Ovary (tissue), 10 donors: ENCODE measurements at regions of chr1 and their contacts with region 1.

Region 1: GRCh38 chr1:27321813-27322577 is at the start of gene TMEM222:
- DNase-seq: peak; percentile 94 to 97 (median 96)
- H3K4me3 ChIP-seq: peak within 1 kb of the TSS; percentile 92
- H3K27ac ChIP-seq: peak within 1 kb of the TSS in 1 of 2 donors; percentile 56
- H3K4me1 ChIP-seq: peaks cover 9% of the 10 kb centered on the region
- H3K27me3 ChIP-seq: no peaks in the 10 kb centered on the region
- CTCF ChIP-seq: peak in 2 of 3 donors; percentile 56 to 66
- EP300 ChIP-seq: peak; percentile 35
- POLR2A ChIP-seq: no peak
- total RNA-seq, gene TMEM222: 12.9 to 52.5 (median 36.5) TPM

Region 2: DNA sequence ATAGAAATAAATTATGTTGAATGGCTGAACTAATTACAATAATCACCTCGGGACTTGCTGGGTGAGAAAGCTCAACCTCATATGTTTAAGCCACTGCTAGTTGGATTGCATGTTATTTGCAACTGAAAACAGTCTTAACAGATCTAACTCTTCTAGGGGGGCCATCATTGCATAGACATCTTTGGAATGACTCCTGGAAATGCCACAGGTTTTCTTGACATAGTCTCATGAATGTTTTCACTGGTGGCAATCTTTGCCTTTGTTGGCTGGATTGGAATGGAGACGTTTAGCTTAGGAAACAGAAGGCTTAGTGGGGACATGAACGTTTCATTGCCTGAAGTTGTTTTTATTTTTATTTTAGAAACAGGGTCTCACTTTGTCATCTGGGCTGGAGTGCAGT is 96.4 kb before region 1 on chr1:
- intact Hi-C with region 1: no loop called
- DNase-seq: no peak
- H3K4me3 ChIP-seq: no peak overlapping the region
- H3K27ac ChIP-seq: no peak overlapping the region
- H3K4me1 ChIP-seq: no peaks in the 10 kb centered on the region
- H3K27me3 ChIP-seq: no peaks in the 10 kb centered on the region
- CTCF ChIP-seq: no peak
- EP300 ChIP-seq: no peak
- POLR2A ChIP-seq: no peak

Region 3: DNA sequence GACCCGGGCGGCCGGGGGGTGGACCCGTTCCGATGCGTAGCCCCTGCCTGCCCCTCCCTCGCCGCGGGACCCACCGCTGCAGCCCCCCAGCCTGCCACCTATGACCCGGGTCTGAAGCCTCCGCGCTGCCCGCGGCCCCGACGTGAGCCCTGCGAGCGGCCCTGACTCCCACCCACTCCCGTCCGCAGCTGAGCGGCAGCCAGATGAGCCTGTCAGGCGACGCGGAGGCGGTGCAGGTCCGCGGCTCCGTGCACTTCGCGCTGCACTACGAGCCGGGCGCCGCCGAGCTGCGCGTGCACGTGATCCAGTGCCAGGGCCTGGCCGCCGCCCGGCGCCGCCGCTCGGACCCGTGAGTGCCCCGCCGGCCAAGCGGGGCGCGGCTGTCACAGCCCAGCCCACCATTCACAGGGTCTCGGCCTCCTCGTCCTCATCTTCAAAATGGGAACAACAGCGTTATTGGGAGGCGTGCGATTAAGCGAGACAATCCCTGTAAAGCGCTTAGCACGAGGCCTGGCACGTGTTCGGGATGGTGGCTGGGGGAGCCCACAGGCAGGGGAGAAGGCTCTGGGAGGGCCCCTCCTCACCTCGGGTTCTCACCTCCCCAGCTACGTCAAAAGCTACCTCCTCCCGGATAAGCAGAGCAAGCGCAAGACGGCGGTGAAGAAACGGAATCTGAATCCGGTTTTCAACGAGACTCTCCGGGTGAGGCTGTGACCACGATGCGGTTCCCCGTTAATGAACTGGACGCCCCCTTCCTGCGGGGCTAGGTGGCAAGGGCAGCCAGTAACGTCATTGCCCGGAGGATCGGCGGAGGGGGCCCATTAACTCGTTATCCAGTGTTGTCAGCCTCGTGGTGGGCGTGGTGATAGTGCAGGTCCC is 28.0 kb after region 1 on chr1:
- intact Hi-C with region 1: loop called in 2 of 4 experiments (anchors 2 to 5 kb)
- DNase-seq: peak; percentile 63 to 79 (median 66)
- H3K4me3 ChIP-seq: peak overlapping the region; percentile 45
- H3K27ac ChIP-seq: no peak overlapping the region
- H3K4me1 ChIP-seq: peaks cover 8% of the 10 kb centered on the region
- H3K27me3 ChIP-seq: no peaks in the 10 kb centered on the region
- CTCF ChIP-seq: peak in 1 of 3 donors; percentile 6
- EP300 ChIP-seq: no peak
- POLR2A ChIP-seq: no peak

Region 4: DNA sequence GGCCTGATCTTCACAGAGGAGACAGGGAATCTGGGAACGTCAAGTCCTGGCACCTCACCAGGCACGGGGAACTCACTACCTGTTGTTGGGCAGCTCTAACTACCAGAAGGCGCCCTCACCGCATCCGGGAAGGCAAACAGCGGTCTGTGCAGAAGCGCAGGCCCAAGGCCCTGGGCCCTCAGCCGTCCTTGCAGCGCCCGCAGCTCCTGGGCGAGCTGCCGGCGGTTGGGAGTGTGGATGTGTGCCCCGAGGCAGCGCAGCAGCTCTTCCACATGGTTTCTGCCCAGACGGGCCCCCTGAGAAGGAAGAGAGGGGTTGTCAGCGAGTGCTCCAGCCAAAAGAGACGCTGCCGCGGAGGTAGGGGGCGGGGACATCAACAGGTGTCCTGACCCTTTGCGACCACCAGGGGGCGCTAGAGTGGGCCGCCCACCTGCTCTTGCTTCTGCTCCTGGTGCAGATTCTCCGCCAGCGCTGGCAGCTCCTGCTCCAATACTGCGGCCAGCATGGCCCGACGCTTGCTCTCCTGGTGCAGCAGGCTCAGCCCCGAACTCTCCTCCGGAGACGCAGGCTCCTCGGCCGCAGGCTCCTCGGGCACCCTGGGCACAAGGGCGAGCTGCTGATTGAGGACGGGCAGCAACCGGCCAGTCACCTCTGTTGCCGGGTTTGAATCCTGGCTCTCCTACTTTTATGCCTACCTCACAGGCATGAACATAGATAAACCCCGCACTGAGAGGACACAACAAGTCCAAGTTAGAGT is 35.5 kb after region 1 on chr1:
- intact Hi-C with region 1: loop called in 1 of 4 experiments (anchors 5 kb)
- DNase-seq: peak; percentile 65 to 83 (median 78)
- H3K4me3 ChIP-seq: no peak overlapping the region
- H3K27ac ChIP-seq: no peak overlapping the region
- H3K4me1 ChIP-seq: peaks cover 3% of the 10 kb centered on the region
- H3K27me3 ChIP-seq: no peaks in the 10 kb centered on the region
- CTCF ChIP-seq: peak; percentile 91 to 99 (median 95)
- EP300 ChIP-seq: no peak
- POLR2A ChIP-seq: no peak